WTC11 (cell line): ENCODE measurements at regions of chr15 and their contacts with region 1.

Region 1: DNA sequence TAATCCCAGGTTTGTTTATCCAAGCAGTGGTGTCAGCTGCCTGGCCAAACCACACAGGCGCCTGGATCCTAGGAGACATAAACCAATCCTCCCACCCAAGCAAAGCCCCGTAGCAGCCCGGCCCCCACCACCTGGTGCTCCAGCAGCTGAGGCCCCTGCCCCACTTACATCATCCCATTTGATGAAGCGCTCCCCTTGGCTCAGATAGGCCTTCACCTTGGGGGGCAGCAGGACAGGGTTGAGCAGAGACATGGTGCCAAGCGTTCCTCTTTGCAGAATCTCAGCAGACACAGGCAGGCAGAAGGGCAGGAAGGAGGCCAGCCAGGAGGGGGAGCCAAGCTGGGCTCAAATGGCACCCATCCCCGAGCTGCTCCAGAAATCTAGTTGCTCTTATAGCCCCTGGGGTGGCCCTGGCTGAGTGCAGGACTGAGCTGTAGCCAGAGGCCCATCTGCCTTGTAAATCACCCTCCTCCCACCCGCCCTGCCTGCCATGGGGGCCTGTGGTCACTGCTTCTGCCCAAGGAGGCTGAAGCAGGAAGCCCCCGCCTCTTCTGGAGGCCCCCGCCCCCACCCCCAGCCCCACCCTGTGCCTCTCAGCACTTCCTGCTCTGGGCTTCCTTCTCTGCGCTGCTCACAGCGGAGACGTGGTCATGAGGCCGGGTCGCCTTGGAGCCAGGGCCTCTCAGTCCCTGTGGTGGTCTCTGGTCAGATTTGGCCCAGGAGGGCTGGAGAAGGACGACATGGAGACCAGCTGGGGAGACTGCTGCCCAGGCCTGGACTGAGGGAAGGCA is at the start of gene PLCB2:
- DNase-seq: peak; percentile 44
- ATAC-seq: peak; percentile 55
- H3K4me3 Mint-ChIP-seq: peak within 1 kb of the TSS; percentile 22; the same call in 1 of the 2 replicates
- H3K27ac Mint-ChIP-seq: no peak within 1 kb of the TSS
- H3K4me1 Mint-ChIP-seq: peaks cover 35% of the 10 kb centered on the region
- H3K27me3 Mint-ChIP-seq: peaks cover 10% of the 10 kb centered on the region; the same call in 1 of the 2 replicates
- CTCF ChIP-seq: no peak
- total RNA-seq, gene PLCB2: 14.2 to 18.5 TPM (median 15.2 TPM) in 3 replicates

Region 2: DNA sequence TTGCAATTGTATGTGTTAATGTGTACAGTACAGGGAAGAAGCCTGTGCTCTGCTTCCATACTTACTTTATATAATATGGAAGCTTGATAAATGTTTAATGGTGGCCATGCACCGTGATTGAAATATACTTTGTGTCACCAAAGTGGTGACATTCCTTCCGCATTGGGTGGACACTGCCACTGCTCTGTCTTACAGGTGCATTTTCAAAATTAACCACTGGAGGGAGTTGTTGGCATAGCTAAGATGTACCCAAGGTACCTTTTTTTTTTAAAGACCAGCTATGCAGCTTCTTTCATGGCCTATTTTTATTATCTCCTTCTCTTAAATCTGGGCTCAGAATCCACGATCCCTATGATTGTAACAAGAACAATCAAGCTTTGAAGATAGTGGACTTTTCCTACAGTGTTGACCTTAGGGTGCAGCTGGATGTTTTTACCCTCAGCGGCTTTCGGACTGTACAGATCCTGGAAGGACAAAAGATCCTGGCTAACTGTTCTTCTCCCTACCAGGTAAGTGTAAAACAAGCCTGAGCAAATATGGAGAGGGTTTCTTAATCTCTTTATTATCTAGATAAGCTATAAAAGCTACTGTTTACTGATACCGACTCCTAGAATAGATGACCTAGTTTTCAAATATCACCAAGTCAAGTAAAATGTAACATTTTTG is 90.3 kb before region 1 on chr15:
- CTCF ChIA-PET with region 1: interaction called, 22 read pairs
- POLR2A ChIA-PET with region 1: no interaction called
- DNase-seq: no peak
- ATAC-seq: peak; percentile 87
- H3K4me3 Mint-ChIP-seq: no peak overlapping the region
- H3K27ac Mint-ChIP-seq: no peak overlapping the region
- H3K4me1 Mint-ChIP-seq: no peaks in the 10 kb centered on the region
- H3K27me3 Mint-ChIP-seq: no peaks in the 10 kb centered on the region
- CTCF ChIP-seq: peak; percentile 71

Region 3: DNA sequence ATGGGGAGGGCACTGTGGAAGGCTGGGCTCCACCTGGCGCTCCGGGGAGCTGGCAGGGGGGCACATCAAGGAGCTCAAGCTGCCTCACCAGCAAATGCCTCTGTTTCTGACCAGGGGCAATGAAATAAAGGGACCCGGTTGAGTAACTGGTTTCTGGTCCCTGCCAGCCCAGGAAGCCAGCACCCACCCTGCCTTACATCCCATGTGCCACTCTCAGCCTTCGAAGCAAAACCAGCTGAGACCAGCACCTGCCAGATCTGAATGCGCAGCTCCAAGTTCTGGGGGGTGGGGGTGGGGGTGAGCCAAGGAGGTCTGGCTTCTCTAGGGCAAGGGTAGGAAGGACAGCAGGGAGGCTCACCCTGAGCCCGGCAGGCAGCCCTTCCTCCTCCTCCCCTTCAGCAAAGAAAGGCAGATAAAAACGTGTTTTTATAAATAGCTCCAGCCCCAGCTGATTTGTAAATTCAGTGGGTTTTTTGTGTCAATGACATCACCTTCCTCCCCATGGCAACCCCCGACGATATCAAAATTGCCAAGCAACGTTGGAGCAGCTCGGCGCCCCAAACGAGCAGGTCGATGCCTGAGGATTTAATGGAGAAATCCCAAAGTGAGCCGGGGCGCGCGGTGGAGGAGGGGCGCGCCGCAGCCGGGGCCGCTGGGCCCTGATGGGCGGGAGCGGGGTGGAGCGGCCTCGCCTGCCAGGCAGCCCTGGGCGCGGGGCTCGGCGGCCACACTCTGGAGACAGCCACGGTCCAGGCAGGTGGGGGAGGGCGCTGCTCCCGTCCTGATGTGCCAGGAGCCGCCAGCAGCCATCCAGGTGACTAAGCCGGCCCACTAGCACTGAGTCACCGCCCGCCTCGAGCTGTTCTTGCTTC is 68.8 kb before region 1 on chr15 and contains the start of gene PAK6:
- CTCF ChIA-PET with region 1: interaction called, 13 read pairs
- POLR2A ChIA-PET with region 1: no interaction called
- DNase-seq: peak; percentile 82
- ATAC-seq: peak; percentile 92
- H3K4me3 Mint-ChIP-seq: peak within 1 kb of the TSS; percentile 60
- H3K27ac Mint-ChIP-seq: no peak within 1 kb of the TSS
- H3K4me1 Mint-ChIP-seq: peaks cover 12% of the 10 kb centered on the region
- H3K27me3 Mint-ChIP-seq: no peaks in the 10 kb centered on the region
- CTCF ChIP-seq: no peak
- total RNA-seq, gene PAK6: 8.7 to 11.7 TPM (median 9.6 TPM) in 3 replicates

Region 4: GRCh38 chr15:40282144-40282868 is 25.3 kb before region 1 on chr15:
- CTCF ChIA-PET with region 1: interaction called, 690 read pairs
- POLR2A ChIA-PET with region 1: interaction called, 12 read pairs
- DNase-seq: peak; percentile 68
- ATAC-seq: peak; percentile 14
- H3K4me3 Mint-ChIP-seq: peak overlapping the region; percentile 63
- H3K27ac Mint-ChIP-seq: no peak overlapping the region
- H3K4me1 Mint-ChIP-seq: peaks cover 56% of the 10 kb centered on the region
- H3K27me3 Mint-ChIP-seq: peaks cover 76% of the 10 kb centered on the region
- CTCF ChIP-seq: peak; percentile 28; the same call in 1 of the 2 replicates

Region 5: GRCh38 chr15:40290918-40291574 is 16.6 kb before region 1 on chr15:
- CTCF ChIA-PET with region 1: interaction called, 341 read pairs
- POLR2A ChIA-PET with region 1: interaction called, 5 read pairs
- DNase-seq: peak; percentile 69
- ATAC-seq: peak; percentile 76
- H3K4me3 Mint-ChIP-seq: peak overlapping the region; percentile 56
- H3K27ac Mint-ChIP-seq: no peak overlapping the region
- H3K4me1 Mint-ChIP-seq: peaks cover 18% of the 10 kb centered on the region
- H3K27me3 Mint-ChIP-seq: peaks cover 42% of the 10 kb centered on the region
- CTCF ChIP-seq: no peak

Region 6: GRCh38 chr15:40323239-40323952 is 15.8 kb after region 1 on chr15 and contains the start of gene INAFM2:
- CTCF ChIA-PET with region 1: interaction called, 104 read pairs
- POLR2A ChIA-PET with region 1: interaction called, 4 read pairs
- DNase-seq: peak; percentile 96
- ATAC-seq: peak; percentile 82
- H3K4me3 Mint-ChIP-seq: peak within 1 kb of the TSS; percentile 68
- H3K27ac Mint-ChIP-seq: no peak within 1 kb of the TSS
- H3K4me1 Mint-ChIP-seq: peaks cover 62% of the 10 kb centered on the region
- H3K27me3 Mint-ChIP-seq: peaks cover 25% of the 10 kb centered on the region
- CTCF ChIP-seq: no peak
- total RNA-seq, gene INAFM2: 28.2 to 34.2 TPM (median 30.3 TPM) in 3 replicates

Region 7: DNA sequence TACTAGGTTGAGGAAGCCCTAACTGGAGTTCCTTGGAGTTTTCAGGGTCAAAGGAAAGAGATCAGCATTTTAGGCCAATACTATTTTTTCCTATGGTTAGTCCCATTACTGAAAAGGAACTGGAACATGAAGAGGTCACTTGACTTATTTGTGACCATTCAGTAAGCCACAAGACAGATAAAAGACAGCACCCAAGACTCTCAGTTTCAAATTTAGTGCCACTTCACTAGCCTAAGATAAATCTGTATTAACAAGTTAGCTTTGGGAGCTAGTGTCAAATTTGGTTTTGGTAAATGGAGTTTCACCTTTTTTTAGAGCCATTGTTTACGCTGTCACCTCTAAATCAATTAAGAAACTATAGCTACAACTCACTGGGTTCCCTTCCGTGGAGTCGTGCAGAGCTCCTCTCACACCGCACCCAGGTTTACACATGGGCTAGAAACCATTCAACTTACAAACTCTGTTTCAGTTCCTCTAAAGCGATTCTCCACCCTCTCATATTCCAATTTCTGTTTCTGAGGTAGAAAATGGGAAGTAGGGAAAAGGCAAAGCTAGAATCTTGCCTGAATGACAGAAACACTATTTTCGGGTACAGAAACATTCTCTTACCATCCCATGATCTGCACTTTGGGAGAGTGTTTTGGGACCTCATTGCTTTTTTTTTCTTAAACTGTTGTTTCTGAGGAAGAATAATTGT is 242.9 kb after region 1 on chr15:
- CTCF ChIA-PET with region 1: no interaction called
- POLR2A ChIA-PET with region 1: no interaction called
- DNase-seq: no peak
- ATAC-seq: no peak
- H3K4me3 Mint-ChIP-seq: no peak overlapping the region
- H3K27ac Mint-ChIP-seq: no peak overlapping the region
- H3K4me1 Mint-ChIP-seq: peaks cover 29% of the 10 kb centered on the region
- H3K27me3 Mint-ChIP-seq: no peaks in the 10 kb centered on the region
- CTCF ChIP-seq: no peak